Activated CD8-positive, alpha-beta memory T cell treated with anti-CD3 and anti-CD28 coated beads, Interleukin-2, amount 10 ng/mL, durations not matched to agents 7 days and 5 days (primary cell): ENCODE measurements at regions of chr9 and their contacts with region 1.

Region 1: DNA sequence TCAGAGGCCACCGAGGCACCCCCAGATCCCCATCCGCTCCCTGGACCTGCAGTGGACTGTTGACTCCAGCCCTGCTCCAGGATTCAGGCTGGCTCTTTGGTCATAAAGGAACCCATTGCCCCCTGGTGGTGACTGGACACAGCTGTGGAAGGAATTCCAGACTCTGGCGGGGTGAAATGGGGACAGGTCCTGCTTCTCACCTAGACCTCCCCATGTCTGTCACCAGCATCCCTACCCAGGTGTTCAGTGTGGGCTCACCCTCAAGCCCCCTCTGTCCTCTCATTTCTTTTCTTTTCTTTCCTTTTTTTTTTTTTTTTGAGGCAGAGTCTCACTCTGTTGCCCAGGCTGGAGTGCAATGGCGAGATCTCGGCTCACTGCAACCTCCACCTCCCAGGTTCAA is 25.5 kb upstream of the STXBP1 start:
- DNase-seq: peak; percentile 77
- ATAC-seq: peak; percentile 82
- H3K4me3 Mint-ChIP-seq: no peak overlapping the region
- H3K27ac Mint-ChIP-seq: no peak overlapping the region
- H3K4me1 Mint-ChIP-seq: peaks cover 22% of the 10 kb centered on the region
- H3K27me3 Mint-ChIP-seq: peaks cover 16% of the 10 kb centered on the region

Region 2: GRCh38 chr9:127503947-127504782 is 82.4 kb before region 1 on chr9:
- CTCF ChIA-PET with region 1: interaction called, 93 read pairs
- DNase-seq: peak; percentile 88
- ATAC-seq: peak; percentile 93
- H3K4me3 Mint-ChIP-seq: no peak overlapping the region
- H3K27ac Mint-ChIP-seq: no peak overlapping the region
- H3K4me1 Mint-ChIP-seq: peaks cover 6% of the 10 kb centered on the region
- H3K27me3 Mint-ChIP-seq: no peaks in the 10 kb centered on the region

Region 3: GRCh38 chr9:127611899-127612790 is 25.6 kb after region 1 on chr9 and contains the start of gene STXBP1:
- CTCF ChIA-PET with region 1: interaction called, 12 read pairs
- DNase-seq: peak; percentile 90
- ATAC-seq: peak; percentile 91
- H3K4me3 Mint-ChIP-seq: peak within 1 kb of the TSS; percentile 85
- H3K27ac Mint-ChIP-seq: peak within 1 kb of the TSS; percentile 58
- H3K4me1 Mint-ChIP-seq: peaks cover 31% of the 10 kb centered on the region
- H3K27me3 Mint-ChIP-seq: peaks cover 42% of the 10 kb centered on the region
- total RNA-seq, gene STXBP1: 22.8 to 26.0 TPM